HCT116 (cell line): ENCODE measurements at regions of chr20 and their contacts with region 1.

Region 1: GRCh38 chr20:57622579-57623377 is 2.6 kb upstream of the ZBP1 start:
- DNase-seq: peak; percentile 45
- ATAC-seq: peak; percentile 94
- H3K4me3 ChIP-seq: no peak overlapping the region
- H3K27ac ChIP-seq: no peak overlapping the region
- H3K4me1 ChIP-seq: peaks cover 6 to 14% of the 10 kb centered on the region in 2 experiments
- H3K27me3 ChIP-seq: peaks cover 24% of the 10 kb centered on the region; the same call in 1 of the 2 replicates
- CTCF ChIP-seq: peak; percentile 67 to 97 (median 90)
- POLR2A ChIP-seq: no peak
- RAD21 ChIP-seq: peak; percentile 81

Region 2: GRCh38 chr20:57680131-57680716 is 57.4 kb after region 1 on chr20:
- CTCF ChIA-PET with region 1: no interaction called
- POLR2A ChIA-PET with region 1: no interaction called
- RAD21 ChIA-PET with region 1: no interaction called
- intact Hi-C with region 1: no loop called
- DNase-seq: no peak
- ATAC-seq: no peak
- H3K4me3 ChIP-seq: no peak overlapping the region
- H3K27ac ChIP-seq: no peak overlapping the region
- H3K4me1 ChIP-seq: no peaks in the 10 kb centered on the region
- H3K27me3 ChIP-seq: peaks cover 93% of the 10 kb centered on the region
- CTCF ChIP-seq: no peak
- POLR2A ChIP-seq: no peak
- RAD21 ChIP-seq: no peak

Region 3: DNA sequence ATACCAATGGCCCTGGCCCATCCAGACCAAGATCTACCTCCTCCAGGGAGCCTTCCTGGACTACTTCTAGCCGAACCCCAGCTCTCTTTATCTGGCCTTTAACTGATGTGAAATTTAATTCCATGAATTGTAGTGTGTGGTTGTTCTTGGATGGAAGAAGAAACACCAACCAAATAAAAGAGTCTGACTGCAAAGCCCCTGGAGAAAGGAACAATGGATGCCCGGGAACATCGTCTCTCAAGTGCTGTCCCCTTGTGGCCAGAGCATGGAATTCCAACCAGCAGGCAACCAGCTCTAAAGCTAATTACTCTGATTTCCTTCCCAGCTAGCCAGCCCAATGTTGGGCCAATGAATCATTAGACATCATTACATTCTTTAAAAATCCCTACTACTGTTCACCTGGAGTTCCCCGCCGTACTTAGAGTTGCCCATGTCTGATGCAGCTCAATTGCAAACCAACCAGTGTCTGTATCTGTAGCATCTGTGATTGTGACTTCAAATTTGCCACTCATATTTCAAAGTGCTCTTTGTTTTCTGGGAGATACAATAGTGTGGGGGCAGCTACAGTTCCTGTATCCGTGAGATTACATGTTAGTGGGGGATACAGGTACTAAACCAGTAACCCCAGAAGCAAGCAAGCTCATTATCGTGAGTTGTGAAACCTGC is 464.5 kb after region 1 on chr20:
- CTCF ChIA-PET with region 1: interaction called, 20 read pairs
- POLR2A ChIA-PET with region 1: interaction called, 3 read pairs
- RAD21 ChIA-PET with region 1: no interaction called
- intact Hi-C with region 1: loop called (anchors 1 kb)
- DNase-seq: peak; percentile 16
- ATAC-seq: peak; percentile 76
- H3K4me3 ChIP-seq: no peak overlapping the region
- H3K27ac ChIP-seq: no peak overlapping the region
- H3K4me1 ChIP-seq: no peaks in the 10 kb centered on the region
- H3K27me3 ChIP-seq: peaks cover 21% of the 10 kb centered on the region
- CTCF ChIP-seq: peak; percentile 64 to 96 (median 91); a peak in 5 of 6 replicates
- POLR2A ChIP-seq: no peak
- RAD21 ChIP-seq: peak; percentile 77

Region 4: GRCh38 chr20:58179432-58180099 is 556.8 kb after region 1 on chr20:
- CTCF ChIA-PET with region 1: interaction called, 23 read pairs
- POLR2A ChIA-PET with region 1: no interaction called
- RAD21 ChIA-PET with region 1: interaction called, 3 to 5 read pairs
- intact Hi-C with region 1: loop called (anchors 1 kb)
- DNase-seq: no peak
- ATAC-seq: peak; percentile 94
- H3K4me3 ChIP-seq: peak overlapping the region; percentile 32 to 50
- H3K27ac ChIP-seq: no peak overlapping the region
- H3K4me1 ChIP-seq: peaks cover 0 to 11% of the 10 kb centered on the region in 2 experiments; a peak in 2 of 4 replicates
- H3K27me3 ChIP-seq: no peaks in the 10 kb centered on the region; the same call in 1 of the 2 replicates
- CTCF ChIP-seq: peak; percentile 71 to 93 (median 89); a peak in 5 of 6 replicates
- POLR2A ChIP-seq: no peak
- RAD21 ChIP-seq: peak; percentile 89

Region 5: GRCh38 chr20:58209652-58210397 is 587.0 kb after region 1 on chr20:
- CTCF ChIA-PET with region 1: interaction called, 15 read pairs
- POLR2A ChIA-PET with region 1: no interaction called
- RAD21 ChIA-PET with region 1: interaction called in 1 of 2 experiments, 3 read pairs
- intact Hi-C with region 1: loop called (anchors 10 kb)
- DNase-seq: peak; percentile 52
- ATAC-seq: peak; percentile 93
- H3K4me3 ChIP-seq: no peak overlapping the region
- H3K27ac ChIP-seq: no peak overlapping the region
- H3K4me1 ChIP-seq: no peaks in the 10 kb centered on the region
- H3K27me3 ChIP-seq: no peaks in the 10 kb centered on the region
- CTCF ChIP-seq: peak; percentile 100
- POLR2A ChIP-seq: no peak
- RAD21 ChIP-seq: peak; percentile 99